Activated CD8-positive, alpha-beta T cell treated with anti-CD3 and anti-CD28 coated beads, Interleukin-2, amount 10 ng/mL, durations not matched to agents 7 days and 5 days (primary cell): ENCODE measurements at regions of chr18 and their contacts with region 1.

Region 1: GRCh38 chr18:9109523-9109922 is 7.0 kb downstream of the NDUFV2 start:
- DNase-seq: no peak
- ATAC-seq: no peak
- H3K4me3 Mint-ChIP-seq: peak overlapping the region; percentile 30
- H3K27ac Mint-ChIP-seq: peak overlapping the region; percentile 62
- H3K4me1 Mint-ChIP-seq: peaks cover 83% of the 10 kb centered on the region
- H3K27me3 Mint-ChIP-seq: no peaks in the 10 kb centered on the region

Region 2: DNA sequence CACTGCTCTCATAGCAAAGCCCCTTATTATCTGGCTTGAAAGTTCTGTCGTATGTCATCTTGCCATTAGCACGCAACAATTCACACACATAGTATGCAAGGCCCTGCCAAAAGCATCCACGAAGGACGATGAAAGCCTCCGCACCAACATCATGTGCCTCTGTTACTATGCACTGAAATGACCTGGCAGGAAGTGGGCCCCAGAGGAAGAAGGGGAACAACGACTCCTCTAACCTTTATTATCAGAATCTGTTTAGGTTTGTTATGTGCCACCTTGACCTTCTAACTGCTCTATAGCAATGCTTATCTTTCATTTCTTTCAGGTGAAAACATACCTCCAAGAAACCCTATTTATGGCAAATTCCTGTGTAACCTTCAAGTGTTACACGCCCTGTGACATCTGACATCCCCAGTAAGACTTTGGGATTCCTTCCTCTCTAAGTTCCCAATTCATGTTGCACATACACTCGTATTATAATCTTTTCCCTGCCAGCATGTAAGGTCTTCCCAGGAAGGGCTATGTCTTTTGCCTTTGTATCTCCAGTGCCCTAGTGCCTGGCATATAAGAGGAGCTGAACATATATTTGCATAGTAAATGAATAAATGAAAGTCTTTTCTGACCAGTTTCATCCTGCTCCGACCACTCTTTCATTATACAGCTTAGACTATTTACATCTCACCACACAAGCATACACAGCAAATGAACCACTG is 14.1 kb before region 1 on chr18:
- CTCF ChIA-PET with region 1: interaction called, 54 read pairs
- POLR2A ChIA-PET with region 1: interaction called, 131 read pairs
- DNase-seq: peak; percentile 78
- ATAC-seq: peak; percentile 66
- H3K4me3 Mint-ChIP-seq: peak overlapping the region; percentile 54
- H3K27ac Mint-ChIP-seq: peak overlapping the region; percentile 91
- H3K4me1 Mint-ChIP-seq: peaks cover 61% of the 10 kb centered on the region
- H3K27me3 Mint-ChIP-seq: no peaks in the 10 kb centered on the region